HCT116 (cell line): ENCODE measurements at regions of chr7 and their contacts with region 1.

Region 1: DNA sequence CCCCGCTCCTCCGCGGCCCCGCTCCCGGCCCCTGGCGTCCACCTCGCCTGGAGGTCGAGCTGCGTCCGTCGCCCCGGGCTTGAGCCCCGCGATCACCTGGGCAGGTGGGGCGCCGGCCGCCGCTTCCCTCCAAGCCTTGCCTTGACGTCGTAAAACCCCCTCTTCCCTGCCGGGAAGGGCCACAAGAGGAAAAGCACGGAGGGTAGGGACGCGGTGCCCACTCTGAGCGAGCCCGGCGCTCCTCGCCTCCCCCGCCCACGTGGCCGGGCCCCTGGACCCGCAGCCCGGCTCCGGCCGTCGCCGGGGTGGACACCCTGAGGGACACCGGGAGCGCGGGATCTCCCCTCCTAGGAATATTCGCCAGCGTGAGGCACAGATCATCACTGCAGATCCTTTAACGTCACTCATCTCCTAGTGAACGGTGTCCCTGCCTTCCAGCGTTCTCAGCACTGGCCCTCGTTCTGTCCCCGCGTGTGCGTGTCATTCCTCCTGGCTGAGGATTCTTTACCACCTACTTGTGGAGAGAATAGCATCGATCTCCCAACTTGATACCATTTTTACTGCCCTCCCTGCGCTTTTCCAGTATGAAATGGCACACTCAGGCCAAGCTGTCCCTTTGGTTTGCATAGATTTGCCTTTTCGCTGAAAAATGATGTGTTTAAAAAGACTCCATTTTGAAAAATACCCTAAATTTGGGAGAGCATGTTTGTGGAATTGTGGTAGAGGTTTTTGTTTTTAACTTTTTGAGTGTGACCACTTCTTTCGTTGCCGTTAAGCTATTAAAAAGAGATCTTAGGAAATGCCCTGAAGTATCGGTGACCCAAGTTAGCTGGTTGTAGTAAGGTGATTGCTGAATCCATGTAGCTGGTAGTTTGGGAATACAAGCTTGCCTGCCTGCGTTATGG is 649 bp downstream of the ACTR3B start:
- DNase-seq: no peak
- ATAC-seq: peak; percentile 67
- H3K4me3 ChIP-seq: peak overlapping the region; percentile 90
- H3K27ac ChIP-seq: peak overlapping the region; percentile 88
- H3K4me1 ChIP-seq: peaks cover 12 to 18% of the 10 kb centered on the region in 2 experiments
- H3K27me3 ChIP-seq: no peaks in the 10 kb centered on the region
- CTCF ChIP-seq: no peak
- POLR2A ChIP-seq: no peak
- RAD21 ChIP-seq: no peak

Region 2: DNA sequence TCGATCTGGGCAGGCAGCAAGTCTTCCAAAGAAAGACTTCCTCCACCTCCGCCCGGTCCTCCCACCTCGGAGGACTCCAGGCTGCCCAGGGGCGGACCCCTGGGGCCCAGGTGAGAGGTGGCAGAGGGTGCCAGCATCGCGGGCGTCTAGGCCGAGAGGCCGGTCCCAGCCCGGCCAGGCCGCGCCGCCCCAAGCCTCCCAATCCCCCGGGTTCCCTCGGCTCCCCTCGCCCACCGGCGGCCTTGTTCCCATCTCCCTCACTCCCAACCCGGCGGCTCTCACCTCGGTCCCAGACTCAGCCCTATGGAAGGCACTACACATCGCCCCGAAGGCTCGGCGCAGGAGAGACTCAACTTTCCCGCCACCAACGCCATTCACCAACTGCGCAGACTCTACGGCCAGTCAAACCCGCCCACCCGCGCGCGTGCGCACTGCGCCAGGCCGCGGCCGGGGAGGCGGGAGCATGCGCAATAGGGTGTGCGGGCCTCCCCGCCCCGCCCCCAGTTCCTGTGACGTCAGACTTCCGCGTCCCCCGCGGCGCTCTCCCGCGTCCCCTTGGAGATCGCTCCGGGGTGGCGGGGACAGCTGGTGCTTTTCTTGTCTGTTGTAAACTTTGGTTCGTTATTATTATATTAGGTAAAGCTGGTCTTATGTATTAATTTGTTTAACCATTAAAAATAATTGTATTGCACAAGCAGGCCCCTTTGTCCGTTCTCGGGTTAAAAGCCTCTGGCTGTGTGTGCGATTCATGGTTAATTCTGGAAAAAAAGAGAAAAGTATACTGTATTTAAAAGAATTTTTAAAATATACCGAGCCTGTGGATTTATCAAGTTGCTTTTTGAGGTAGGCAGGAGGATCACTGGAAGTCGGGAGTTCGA is 84.2 kb before region 1 on chr7 and contains the start of gene XRCC2:
- CTCF ChIA-PET with region 1: no interaction called
- POLR2A ChIA-PET with region 1: no interaction called
- RAD21 ChIA-PET with region 1: no interaction called
- intact Hi-C with region 1: loop called (anchors 1 kb)
- DNase-seq: peak; percentile 77
- ATAC-seq: peak; percentile 92
- H3K4me3 ChIP-seq: peak within 1 kb of the TSS; percentile 77 to 90
- H3K27ac ChIP-seq: peak within 1 kb of the TSS; percentile 77
- H3K4me1 ChIP-seq: peaks cover 0 to 13% of the 10 kb centered on the region in 2 experiments; a peak in 3 of 4 replicates
- H3K27me3 ChIP-seq: no peaks in the 10 kb centered on the region
- CTCF ChIP-seq: no peak
- POLR2A ChIP-seq: peak; percentile 90
- RAD21 ChIP-seq: 0 out of 2 replicates have a peak, but pooled peaks have one; percentile 14
- total RNA-seq, gene XRCC2: 14.8 TPM

Region 3: GRCh38 chr7:152709287-152710152 is 50.7 kb before region 1 on chr7:
- CTCF ChIA-PET with region 1: no interaction called
- POLR2A ChIA-PET with region 1: no interaction called
- RAD21 ChIA-PET with region 1: no interaction called
- intact Hi-C with region 1: loop called (anchors 2 kb)
- DNase-seq: peak; percentile 81
- ATAC-seq: peak; percentile 28; the same call in 1 of the 2 replicates
- H3K4me3 ChIP-seq: peak overlapping the region in 1 of 2 experiments; percentile 33; a peak in 2 of 4 replicates
- H3K27ac ChIP-seq: no peak overlapping the region; the same call in 1 of the 2 replicates
- H3K4me1 ChIP-seq: peaks cover 27 to 34% of the 10 kb centered on the region in 2 experiments
- H3K27me3 ChIP-seq: no peaks in the 10 kb centered on the region
- CTCF ChIP-seq: no peak
- POLR2A ChIP-seq: no peak
- RAD21 ChIP-seq: no peak